Left colon (tissue), 2 donors: ENCODE measurements at regions of chr7 and their contacts with region 1.

Region 1: GRCh38 chr7:29921404-29922010 is 68.1 kb downstream of the SCRN1 start:
- DNase-seq: peak in 1 of 2 donors; percentile 26
- ATAC-seq: peak; percentile 79

Region 2: DNA sequence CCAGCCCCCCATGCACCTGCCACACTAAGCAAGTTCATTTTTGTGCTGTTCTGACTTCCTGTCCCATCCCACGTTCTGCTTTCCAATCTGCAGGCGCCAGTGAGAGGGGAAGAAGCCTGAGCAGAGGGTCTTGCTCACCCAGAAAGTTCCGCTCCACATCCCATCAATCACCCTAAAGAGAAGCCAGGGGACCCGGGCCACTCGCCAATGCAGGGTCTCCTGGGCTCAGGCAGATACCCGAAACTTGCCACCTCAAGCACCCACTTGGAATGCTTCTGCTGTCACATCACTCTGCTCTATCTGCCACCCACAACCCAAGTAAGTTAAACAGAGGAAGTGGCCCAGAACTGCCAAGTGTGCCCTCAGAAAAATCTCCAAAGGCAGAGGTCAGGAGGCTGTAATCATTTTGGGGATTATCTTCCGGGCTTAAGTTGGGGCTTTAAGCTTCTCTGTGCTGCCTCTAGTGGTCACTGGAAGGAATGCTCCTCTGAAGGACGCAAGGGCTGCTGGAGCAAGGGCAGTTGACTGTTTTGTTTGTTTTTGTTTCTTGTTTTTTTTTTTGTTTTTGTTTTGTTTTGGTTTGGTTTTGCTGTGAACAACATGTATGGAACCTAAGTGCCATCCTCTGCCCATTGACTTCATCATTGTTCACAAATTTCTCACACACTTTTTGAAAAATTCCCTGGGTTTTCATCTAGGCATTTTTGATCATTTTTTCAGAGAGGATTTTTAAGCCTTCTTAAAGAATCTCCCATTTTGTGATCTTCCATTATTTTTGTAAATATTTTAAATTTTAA is 332.4 kb before region 1 on chr7:
- intact Hi-C with region 1: no loop called
- DNase-seq: peak; percentile 55 to 63
- ATAC-seq: peak; percentile 30

Region 3: GRCh38 chr7:29639881-29640595 is 281.5 kb before region 1 on chr7:
- intact Hi-C with region 1: loop called in 1 of 2 experiments (anchors 10 kb)
- DNase-seq: no peak
- ATAC-seq: no peak